Uterus (tissue), 4 donors: ENCODE measurements at regions of chr12 and their contacts with region 1.

Region 1: GRCh38 chr12:51047655-51048540 is at the start of gene LETMD1:
- DNase-seq: peak; percentile 93 to 96
- H3K4me3 ChIP-seq: peak within 1 kb of the TSS; percentile 69 to 84
- H3K27ac ChIP-seq: peak within 1 kb of the TSS; percentile 92 to 95
- H3K4me1 ChIP-seq: peaks cover 0 to 9% of the 10 kb centered on the region in 2 donors
- H3K27me3 ChIP-seq: no peaks in the 10 kb centered on the region
- CTCF ChIP-seq: peak; percentile 88 to 97 (median 92)
- POLR2A ChIP-seq: peak; percentile 6 to 64
- total RNA-seq, gene LETMD1: 45.9 to 81.5 (median 61.5) TPM

Region 2: GRCh38 chr12:51087818-51088217 is 39.9 kb after region 1 on chr12:
- intact Hi-C with region 1: loop called (anchors 5 kb)
- DNase-seq: no peak
- H3K4me3 ChIP-seq: no peak overlapping the region
- H3K27ac ChIP-seq: no peak overlapping the region
- H3K4me1 ChIP-seq: no peaks in the 10 kb centered on the region
- H3K27me3 ChIP-seq: no peaks in the 10 kb centered on the region
- CTCF ChIP-seq: no peak
- POLR2A ChIP-seq: no peak